ENCODE measurements at regions of chr14 and their contacts with region 1.

Region 1: GRCh38 chr14:65412032-65412846 is at the start of gene FUT8:
- DNase-seq: peak; percentile 97 to 98 (median 97)
- H3K4me3 ChIP-seq: peak within 1 kb of the TSS; percentile 46 to 92 (median 79)
- H3K27ac ChIP-seq: peak within 1 kb of the TSS; percentile 82 to 94 (median 87)
- H3K4me1 ChIP-seq: peaks cover 0 to 15% of the 10 kb centered on the region in 2 donors
- H3K27me3 ChIP-seq: no peaks in the 10 kb centered on the region
- CTCF ChIP-seq: peak; percentile 43 to 73 (median 52)
- POLR2A ChIP-seq: peak; percentile 88 to 93
- total RNA-seq, gene FUT8: 14.3 to 32.1 (median 22.8) TPM

Region 2: GRCh38 chr14:65229751-65230749 is 182.2 kb before region 1 on chr14:
- intact Hi-C with region 1: loop called in 1 of 2 experiments (anchors 5 kb)
- DNase-seq: peak in 6 of 7 donors; percentile 33 to 60 (median 39)
- H3K4me3 ChIP-seq: peak overlapping the region in 3 of 4 donors; percentile 23 to 55 (median 28)
- H3K27ac ChIP-seq: peak overlapping the region in 4 of 5 donors; percentile 24 to 82 (median 58)
- H3K4me1 ChIP-seq: peaks cover 0 to 13% of the 10 kb centered on the region in 2 donors
- H3K27me3 ChIP-seq: no peaks in the 10 kb centered on the region
- CTCF ChIP-seq: no peak
- POLR2A ChIP-seq: no peak

Region 3: DNA sequence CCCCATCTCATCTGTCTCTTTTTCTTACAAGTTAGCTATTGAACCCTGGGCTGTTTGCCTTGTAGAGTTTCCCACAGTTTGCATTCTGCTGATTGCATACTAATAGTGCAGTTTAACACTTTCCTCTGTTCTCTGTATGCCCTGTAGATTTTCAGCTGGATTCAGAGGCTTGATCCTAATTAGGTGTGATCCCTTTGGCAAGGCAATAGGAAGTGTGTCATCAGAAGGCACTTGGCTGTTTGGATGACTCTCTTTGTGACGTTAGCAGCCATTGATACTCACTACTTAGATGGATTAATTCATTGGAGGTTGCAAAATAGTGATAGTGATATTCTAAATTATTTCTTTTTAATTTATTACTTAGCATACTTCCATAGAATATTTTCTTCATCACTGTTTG is 33.9 kb after region 1 on chr14:
- intact Hi-C with region 1: no loop called
- DNase-seq: no peak
- H3K4me3 ChIP-seq: no peak overlapping the region
- H3K27ac ChIP-seq: no peak overlapping the region
- H3K4me1 ChIP-seq: no peaks in the 10 kb centered on the region
- H3K27me3 ChIP-seq: no peaks in the 10 kb centered on the region
- CTCF ChIP-seq: no peak
- POLR2A ChIP-seq: no peak

Region 4: DNA sequence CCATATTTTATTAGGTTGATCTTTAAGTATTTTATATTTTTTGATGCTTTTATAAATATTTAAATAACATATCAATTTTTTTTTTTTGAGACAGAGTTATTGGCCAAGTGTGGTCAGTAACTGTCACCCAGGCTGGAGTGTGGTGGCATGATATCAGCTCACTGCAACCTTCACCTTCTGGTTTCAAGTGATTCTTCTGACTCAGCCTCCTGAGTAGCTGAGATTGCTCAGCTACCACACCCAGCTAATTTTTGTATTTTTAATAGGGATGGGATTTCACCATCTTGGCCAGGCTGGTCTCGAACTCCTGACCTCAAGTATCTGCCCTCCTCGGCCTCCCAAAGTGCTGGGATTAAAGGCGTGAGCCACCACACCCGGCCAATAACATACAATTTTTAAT is 71.4 kb after region 1 on chr14:
- intact Hi-C with region 1: no loop called
- DNase-seq: peak in 2 of 7 donors; percentile 22 to 23
- H3K4me3 ChIP-seq: no peak overlapping the region
- H3K27ac ChIP-seq: no peak overlapping the region
- H3K4me1 ChIP-seq: no peaks in the 10 kb centered on the region
- H3K27me3 ChIP-seq: no peaks in the 10 kb centered on the region
- CTCF ChIP-seq: no peak
- POLR2A ChIP-seq: no peak

Region 5: GRCh38 chr14:65824285-65824977 is 412.2 kb after region 1 on chr14:
- intact Hi-C with region 1: loop called (anchors 5 kb)
- DNase-seq: peak; percentile 47 to 74 (median 58)
- H3K4me3 ChIP-seq: no peak overlapping the region
- H3K27ac ChIP-seq: no peak overlapping the region
- H3K4me1 ChIP-seq: no peaks in the 10 kb centered on the region
- H3K27me3 ChIP-seq: no peaks in the 10 kb centered on the region
- CTCF ChIP-seq: peak; percentile 80 to 95 (median 90)
- POLR2A ChIP-seq: no peak

Region 6: DNA sequence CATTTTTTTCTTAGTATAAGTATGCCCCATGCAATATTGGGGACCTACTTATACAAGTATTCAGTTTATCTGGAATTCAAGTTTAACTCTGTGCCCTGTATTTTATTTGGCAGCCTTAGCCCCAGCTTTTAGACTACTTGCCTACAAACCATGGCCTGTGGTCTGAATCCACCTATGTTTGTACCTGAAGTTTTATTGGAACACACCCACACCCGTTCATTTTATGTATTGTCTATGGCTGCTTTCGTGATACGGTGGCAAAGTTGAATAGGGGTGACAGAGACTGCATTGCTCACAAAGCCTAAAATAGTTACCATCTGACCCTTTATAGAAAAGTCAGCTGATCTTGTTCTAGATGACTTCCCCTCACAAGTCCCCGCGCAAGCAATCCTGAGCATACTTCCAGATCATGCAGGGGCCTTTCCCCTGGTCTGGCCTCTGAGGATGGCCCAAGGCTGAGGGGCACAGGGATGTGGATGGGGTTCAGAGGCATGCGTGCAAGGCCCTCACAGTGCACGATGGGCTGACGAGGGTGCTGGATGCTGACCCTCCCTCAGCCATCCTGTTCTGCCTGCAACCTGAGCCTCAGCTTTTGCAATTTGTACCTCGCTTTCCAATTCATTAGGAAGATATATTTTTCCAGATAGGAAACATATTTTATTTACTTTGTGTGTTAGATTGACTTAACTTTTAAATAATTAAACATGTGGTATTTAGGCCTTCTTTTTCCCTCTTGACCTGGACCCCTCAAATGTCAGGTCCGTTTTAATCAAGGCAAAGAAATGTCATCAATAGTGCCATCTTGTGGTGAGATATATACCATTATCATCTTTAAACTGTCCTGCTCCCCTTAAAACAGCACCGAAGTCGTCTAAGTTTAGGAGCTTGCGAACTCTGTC is 546.7 kb after region 1 on chr14:
- intact Hi-C with region 1: loop called in 1 of 2 experiments (anchors 5 kb)
- DNase-seq: peak in 2 of 7 donors; percentile 2 to 10
- H3K4me3 ChIP-seq: no peak overlapping the region
- H3K27ac ChIP-seq: no peak overlapping the region
- H3K4me1 ChIP-seq: no peaks in the 10 kb centered on the region
- H3K27me3 ChIP-seq: no peaks in the 10 kb centered on the region
- CTCF ChIP-seq: peak; percentile 33 to 63 (median 46)
- POLR2A ChIP-seq: no peak